Activated T-helper 2 cell treated with anti-CD3 and anti-CD28 coated beads, Interferon-gamma antibody, Interleukin-2, Interleukin-4, amounts not matched to agents 10 μg/mL and 5 μg/mL and 100 μg/mL, durations not matched to agents 14 hours and 24 hours and 36 hours (primary cell): ENCODE measurements at regions of chr9 and their contacts with region 1.

Region 1: DNA sequence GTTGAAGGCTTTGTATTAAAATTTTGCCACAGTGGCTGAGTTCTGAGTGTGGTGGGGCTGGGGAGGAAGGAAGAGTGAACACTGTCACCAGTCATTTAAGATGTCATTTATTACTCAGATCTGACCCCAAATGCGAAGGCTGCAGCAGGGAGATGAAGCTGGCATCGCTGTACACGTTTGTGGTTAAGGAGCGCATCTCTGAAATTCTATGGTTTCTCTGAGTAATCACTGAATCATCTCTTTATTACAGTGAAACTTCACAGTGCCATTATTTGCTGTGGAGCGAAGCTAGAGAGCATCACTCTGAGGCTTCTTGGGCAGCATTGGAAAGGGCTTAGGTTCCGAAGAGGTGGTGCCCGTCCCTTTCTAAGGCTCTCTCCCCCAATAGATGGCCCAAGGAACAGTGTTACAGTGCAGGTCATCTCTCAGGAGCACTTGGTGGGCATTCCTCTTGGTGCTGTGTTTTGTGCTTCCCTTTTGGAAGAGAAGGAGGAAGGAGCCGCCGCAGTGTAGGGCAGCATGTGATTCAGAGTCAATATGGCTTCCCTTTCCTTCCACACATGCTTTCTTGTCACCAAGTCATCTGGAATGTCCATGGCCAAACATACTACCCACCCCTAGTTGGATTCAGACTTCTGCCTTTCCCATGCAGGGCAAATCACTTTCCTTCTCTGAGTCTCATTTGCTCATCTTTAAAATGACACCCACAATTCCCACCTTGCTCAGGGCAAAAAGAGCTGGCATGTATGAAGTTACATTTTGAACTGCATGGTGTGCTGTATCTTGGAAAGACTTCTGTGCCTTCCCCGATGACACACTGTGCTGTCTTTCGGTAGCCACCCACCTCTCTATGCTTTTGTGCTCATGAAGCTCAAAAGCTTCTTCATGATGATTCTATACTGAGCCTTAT is 9.3 kb upstream of the TEX48 start:
- DNase-seq: peak; percentile 82
- H3K4me3 Mint-ChIP-seq: peak overlapping the region; percentile 43
- H3K27ac Mint-ChIP-seq: peak overlapping the region; percentile 98
- H3K4me1 Mint-ChIP-seq: peaks cover 93% of the 10 kb centered on the region
- H3K27me3 Mint-ChIP-seq: no peaks in the 10 kb centered on the region

Region 2: DNA sequence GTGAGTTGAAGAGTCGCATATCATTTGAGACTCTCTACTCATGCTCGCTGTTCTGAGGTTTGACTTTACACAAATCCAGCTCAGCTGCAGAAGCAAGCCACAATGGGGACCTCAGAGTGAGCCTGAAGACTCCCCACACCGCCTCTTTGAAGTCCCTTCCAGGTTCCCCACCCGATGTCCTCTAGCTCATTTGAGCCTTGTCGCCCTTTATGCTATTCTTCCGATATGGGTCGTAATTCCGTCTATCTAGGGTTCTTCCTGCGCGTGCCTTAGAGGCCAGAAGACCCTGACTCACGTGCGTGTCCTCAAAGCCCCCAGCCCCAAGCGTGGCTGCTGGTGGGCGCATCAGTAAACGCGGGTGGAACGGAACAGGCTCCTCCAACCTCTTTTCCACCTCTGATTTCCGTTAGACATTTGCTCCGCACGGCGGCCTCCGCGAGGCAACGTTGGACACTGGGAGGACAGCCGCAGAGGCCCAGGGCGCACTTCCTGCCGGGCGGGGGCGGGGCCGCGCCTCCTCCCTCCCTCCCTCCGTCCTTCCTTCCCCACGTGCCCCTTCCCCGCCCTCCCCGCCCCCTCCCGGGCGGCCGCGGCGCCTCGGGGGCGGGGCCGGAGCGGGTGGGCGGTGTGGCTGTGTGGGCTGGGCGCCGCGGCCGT is 1941.1 kb before region 1 on chr9 and contains the start of gene SNX30:
- intact Hi-C with region 1: loop called (anchors 10 kb)
- DNase-seq: peak; percentile 79
- H3K4me3 Mint-ChIP-seq: peak within 1 kb of the TSS; percentile 84
- H3K27ac Mint-ChIP-seq: peak within 1 kb of the TSS; percentile 86
- H3K4me1 Mint-ChIP-seq: peaks cover 52% of the 10 kb centered on the region
- H3K27me3 Mint-ChIP-seq: peaks cover 3% of the 10 kb centered on the region
- total RNA-seq, gene SNX30: 2.4 and 2.8 TPM in 2 replicates

Region 3: DNA sequence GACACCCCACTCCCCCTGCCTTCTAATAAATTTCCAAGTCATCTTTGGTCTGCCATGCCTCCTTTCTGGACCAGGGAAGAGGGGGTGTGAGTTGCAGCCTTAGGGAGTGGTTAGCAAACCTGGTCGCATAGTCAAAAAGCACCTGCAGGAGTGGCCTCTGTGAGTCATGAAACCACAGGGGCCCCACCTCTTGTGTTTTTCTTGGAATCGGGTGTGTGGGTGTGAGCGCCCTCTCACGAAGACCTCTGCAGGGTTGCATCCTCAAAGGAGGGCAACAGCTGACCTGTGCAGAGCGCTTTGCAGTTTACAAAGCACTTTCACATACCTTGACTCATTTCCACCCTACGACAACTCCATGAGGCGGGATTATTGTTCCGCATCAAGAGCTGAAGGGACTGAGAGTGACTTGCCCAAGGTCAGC is 27.5 kb after region 1 on chr9:
- intact Hi-C with region 1: loop called (anchors 1 kb)
- DNase-seq: peak; percentile 93
- H3K4me3 Mint-ChIP-seq: peak overlapping the region; percentile 38
- H3K27ac Mint-ChIP-seq: peak overlapping the region; percentile 94
- H3K4me1 Mint-ChIP-seq: peaks cover 74% of the 10 kb centered on the region
- H3K27me3 Mint-ChIP-seq: no peaks in the 10 kb centered on the region

Region 4: DNA sequence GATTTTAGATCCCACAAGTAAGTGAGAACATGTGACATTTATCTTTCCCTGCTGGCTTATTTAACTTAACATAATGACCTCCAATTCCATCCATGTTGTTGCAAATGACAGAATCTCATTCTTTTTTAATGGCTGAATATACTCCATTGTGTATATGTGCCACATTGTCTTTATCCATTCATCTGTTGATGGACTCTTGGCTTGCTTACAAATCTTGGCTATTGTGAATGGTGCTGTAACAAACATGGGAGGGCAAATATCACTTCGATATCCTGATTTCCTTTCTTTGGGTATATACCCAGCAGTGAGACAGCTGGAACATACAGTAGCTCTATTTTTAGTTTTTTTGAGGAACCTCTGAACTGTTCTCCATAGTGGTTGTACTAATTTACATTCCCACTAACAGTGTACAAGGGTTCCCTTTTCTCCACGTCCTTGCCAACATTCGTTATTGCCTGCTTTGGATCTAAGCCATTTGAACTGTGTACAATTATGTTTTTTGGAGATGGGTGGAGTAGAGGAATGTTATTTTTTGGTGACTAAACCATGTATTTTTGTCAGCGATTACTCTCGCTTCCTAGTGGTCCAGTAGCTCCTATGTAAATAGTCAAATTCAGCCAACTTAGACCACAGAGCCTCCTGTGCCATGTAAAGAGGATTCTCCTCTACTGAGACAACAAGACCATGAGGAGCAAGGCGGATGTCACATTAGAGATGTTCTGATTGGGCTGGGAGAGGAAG is 54.0 kb after region 1 on chr9:
- intact Hi-C with region 1: no loop called
- DNase-seq: no peak
- H3K4me3 Mint-ChIP-seq: no peak overlapping the region
- H3K27ac Mint-ChIP-seq: no peak overlapping the region
- H3K4me1 Mint-ChIP-seq: peaks cover 13% of the 10 kb centered on the region
- H3K27me3 Mint-ChIP-seq: peaks cover 2% of the 10 kb centered on the region

Region 5: GRCh38 chr9:114850871-114851270 is 159.6 kb after region 1 on chr9:
- intact Hi-C with region 1: loop called (anchors 5 kb)
- DNase-seq: no peak
- H3K4me3 Mint-ChIP-seq: no peak overlapping the region
- H3K27ac Mint-ChIP-seq: peak overlapping the region; percentile 9
- H3K4me1 Mint-ChIP-seq: peaks cover 19% of the 10 kb centered on the region
- H3K27me3 Mint-ChIP-seq: peaks cover 10% of the 10 kb centered on the region

Region 6: GRCh38 chr9:114894801-114895433 is 203.6 kb after region 1 on chr9:
- intact Hi-C with region 1: no loop called
- DNase-seq: no peak
- H3K4me3 Mint-ChIP-seq: no peak overlapping the region
- H3K27ac Mint-ChIP-seq: peak overlapping the region; percentile 84
- H3K4me1 Mint-ChIP-seq: peaks cover 50% of the 10 kb centered on the region
- H3K27me3 Mint-ChIP-seq: no peaks in the 10 kb centered on the region

Region 7: DNA sequence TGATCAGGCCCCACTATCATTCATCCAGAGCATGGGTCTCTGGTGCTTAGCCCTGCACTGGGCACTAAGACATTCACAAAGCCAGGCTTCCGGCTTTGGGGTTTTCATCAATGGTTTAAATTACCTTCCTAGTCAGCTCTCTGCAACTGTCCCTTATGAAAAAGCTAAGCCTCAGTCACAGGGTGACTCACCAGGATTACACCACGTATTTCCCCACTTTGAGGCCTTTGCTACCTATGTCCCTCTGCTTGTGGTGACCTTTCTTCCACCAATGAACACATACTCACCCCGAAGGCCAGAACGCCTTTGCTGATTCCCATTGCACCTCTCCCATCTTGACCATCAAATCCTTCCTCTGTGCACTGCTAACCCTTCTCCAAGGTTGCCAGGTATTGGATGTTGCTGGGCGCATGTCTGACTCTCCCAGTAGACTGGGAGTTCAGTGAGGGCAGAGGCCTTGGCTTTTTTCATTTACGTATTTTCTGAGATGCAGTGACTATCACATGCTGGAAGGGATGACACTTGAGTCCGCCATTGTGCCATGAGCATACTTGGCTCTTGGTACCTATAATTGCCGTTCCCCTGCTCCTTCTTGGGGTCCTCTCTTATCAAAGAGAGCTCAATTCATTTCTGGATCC is 297.8 kb after region 1 on chr9:
- intact Hi-C with region 1: loop called (anchors 2 kb)
- DNase-seq: no peak
- H3K4me3 Mint-ChIP-seq: no peak overlapping the region
- H3K27ac Mint-ChIP-seq: peak overlapping the region; percentile 97
- H3K4me1 Mint-ChIP-seq: peaks cover 59% of the 10 kb centered on the region
- H3K27me3 Mint-ChIP-seq: no peaks in the 10 kb centered on the region

Region 8: DNA sequence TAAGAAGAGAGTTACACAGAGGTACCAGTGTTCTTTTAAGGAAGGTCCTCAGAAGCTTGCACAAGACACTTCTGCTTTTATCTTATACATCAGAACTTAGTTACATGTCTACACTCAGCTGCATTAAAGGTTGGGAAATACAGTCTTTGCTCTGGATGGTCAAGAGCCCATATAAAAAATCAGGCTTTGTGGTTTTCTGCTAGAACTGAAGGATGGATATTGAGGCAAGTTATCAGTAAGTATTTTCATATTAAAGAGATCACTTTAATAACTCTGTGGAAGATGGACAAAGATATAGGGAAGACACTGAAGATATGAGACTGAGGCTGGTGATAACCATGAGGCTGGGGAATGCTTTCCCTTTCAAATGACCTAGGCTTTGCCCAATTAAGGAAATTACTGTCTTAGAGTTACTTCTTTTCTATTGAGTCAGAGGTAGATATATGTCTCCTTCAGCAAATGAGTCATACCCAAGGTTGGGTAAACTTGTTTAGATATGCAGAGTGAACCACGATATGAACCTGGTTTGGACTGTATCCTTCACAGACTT is 513.7 kb after region 1 on chr9:
- intact Hi-C with region 1: loop called (anchors 2 kb)
- DNase-seq: no peak
- H3K4me3 Mint-ChIP-seq: no peak overlapping the region
- H3K27ac Mint-ChIP-seq: no peak overlapping the region
- H3K4me1 Mint-ChIP-seq: peaks cover 40% of the 10 kb centered on the region
- H3K27me3 Mint-ChIP-seq: peaks cover 17% of the 10 kb centered on the region